Activated CD4-positive, alpha-beta memory T cell treated with anti-CD3 and anti-CD28 coated beads for 36 hours (primary cell): ENCODE measurements at regions of chr15 and their contacts with region 1.

Region 1: DNA sequence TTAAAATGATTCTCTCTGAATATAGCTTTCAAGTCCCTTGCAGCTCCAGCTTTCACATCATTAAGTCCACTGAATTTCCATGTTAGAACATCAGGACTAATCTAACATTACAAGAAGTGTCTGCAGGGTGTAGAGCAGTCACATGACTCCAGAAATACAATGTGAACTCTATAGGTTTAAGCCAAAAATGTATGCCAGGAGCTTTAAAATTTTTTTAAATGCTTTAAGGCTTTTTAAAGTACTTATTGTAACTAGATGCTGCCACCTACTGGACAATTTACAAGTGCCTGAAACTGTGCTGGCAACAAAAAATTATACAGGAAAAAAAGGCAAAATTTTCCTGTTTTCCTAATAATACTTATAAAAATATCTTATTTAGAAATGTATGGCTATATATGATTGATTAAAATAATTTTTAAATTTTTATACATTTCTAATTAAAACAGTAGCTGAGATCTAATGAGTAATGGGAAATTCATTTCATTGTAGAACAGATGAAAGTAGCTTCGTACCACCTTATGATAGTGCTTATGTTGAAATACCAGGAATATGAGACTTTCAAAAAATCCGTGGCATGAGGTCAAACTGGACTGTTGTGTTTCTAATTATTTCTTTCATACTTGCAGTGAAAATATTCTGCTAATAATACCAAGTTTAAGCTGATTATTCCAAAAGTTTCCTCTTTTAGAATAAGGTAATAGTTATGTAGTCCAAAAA is 25.7 kb downstream of the FSIP1 start:
- DNase-seq: no peak
- H3K4me3 Mint-ChIP-seq: no peak overlapping the region
- H3K27ac Mint-ChIP-seq: no peak overlapping the region
- H3K4me1 Mint-ChIP-seq: no peaks in the 10 kb centered on the region
- H3K27me3 Mint-ChIP-seq: no peaks in the 10 kb centered on the region

Region 2: DNA sequence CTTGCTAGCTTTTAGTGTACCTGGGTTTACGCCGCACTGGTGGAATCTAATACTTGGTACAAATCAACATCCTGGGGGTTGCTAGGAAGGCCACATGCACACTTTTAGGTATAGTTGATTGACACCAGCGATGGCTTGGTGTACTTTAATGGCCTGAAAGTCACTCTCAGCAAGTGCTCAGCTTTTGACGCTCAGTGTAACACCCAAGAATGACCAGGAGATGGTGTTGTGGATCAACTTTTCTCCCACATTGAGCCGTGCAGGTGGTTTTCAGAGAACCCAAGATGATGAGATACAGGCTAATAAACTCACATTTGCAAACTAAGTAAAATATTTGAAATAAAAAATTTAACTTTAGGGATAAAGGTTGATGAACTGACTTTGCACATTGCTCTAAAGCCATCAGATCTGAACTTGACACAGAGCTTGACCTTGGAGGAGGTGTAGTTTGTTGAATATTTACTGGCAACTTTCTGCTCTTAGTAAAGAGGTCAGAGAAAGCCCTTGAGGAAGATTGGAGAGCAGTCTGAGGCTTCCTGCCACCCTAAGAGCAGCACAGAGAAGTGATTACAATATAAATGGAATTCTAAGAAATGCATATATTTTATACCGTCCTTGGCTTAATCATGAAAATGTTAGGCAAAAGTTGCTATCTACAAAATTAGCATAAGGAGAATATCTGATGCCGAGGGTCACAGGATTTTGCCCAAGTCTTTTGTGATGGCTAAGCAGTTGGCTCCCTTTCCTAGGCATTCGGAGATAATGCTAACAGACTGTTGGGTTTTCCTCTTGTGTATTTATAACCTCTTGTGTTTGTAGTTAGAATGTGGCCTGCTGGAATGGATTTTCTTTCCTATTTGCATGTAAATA is 1048.9 kb before region 1 on chr15:
- CTCF ChIA-PET with region 1: interaction called, 27 read pairs
- POLR2A ChIA-PET with region 1: no interaction called
- intact Hi-C with region 1: loop called (anchors 5 kb)
- DNase-seq: peak; percentile 46
- H3K4me3 Mint-ChIP-seq: no peak overlapping the region
- H3K27ac Mint-ChIP-seq: no peak overlapping the region
- H3K4me1 Mint-ChIP-seq: peaks cover 7% of the 10 kb centered on the region
- H3K27me3 Mint-ChIP-seq: no peaks in the 10 kb centered on the region

Region 3: GRCh38 chr15:39171944-39172368 is 585.0 kb before region 1 on chr15:
- CTCF ChIA-PET with region 1: interaction called, 15 read pairs
- POLR2A ChIA-PET with region 1: no interaction called
- intact Hi-C with region 1: no loop called
- DNase-seq: peak; percentile 48
- H3K4me3 Mint-ChIP-seq: no peak overlapping the region
- H3K27ac Mint-ChIP-seq: no peak overlapping the region
- H3K4me1 Mint-ChIP-seq: no peaks in the 10 kb centered on the region
- H3K27me3 Mint-ChIP-seq: peaks cover 19% of the 10 kb centered on the region

Region 4: GRCh38 chr15:39594056-39594763 is 162.8 kb before region 1 on chr15:
- CTCF ChIA-PET with region 1: interaction called, 19 read pairs
- POLR2A ChIA-PET with region 1: no interaction called
- intact Hi-C with region 1: no loop called
- DNase-seq: peak; percentile 63
- H3K4me3 Mint-ChIP-seq: no peak overlapping the region
- H3K27ac Mint-ChIP-seq: no peak overlapping the region
- H3K4me1 Mint-ChIP-seq: peaks cover 8% of the 10 kb centered on the region
- H3K27me3 Mint-ChIP-seq: no peaks in the 10 kb centered on the region

Region 5: DNA sequence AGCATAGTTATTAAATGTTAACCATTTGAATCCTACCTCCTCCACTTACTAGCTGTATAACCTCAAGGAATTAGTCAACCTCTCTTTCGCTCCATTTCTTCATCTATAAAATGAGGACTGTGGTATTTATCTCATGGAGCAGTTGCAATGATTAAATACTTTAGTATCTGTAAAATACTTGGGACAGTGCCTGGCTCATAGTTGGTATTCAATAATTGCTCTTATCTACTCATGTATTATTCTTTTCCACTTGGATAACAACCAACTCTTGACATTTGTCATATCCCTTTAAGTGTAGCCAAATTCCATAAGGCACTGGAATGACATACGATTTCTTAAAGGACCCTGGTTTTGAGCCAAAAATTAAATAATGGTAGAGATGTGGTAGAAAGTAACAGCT is 46.3 kb before region 1 on chr15:
- CTCF ChIA-PET with region 1: interaction called, 19 read pairs
- POLR2A ChIA-PET with region 1: no interaction called
- intact Hi-C with region 1: no loop called
- DNase-seq: no peak
- H3K4me3 Mint-ChIP-seq: no peak overlapping the region
- H3K27ac Mint-ChIP-seq: no peak overlapping the region
- H3K4me1 Mint-ChIP-seq: no peaks in the 10 kb centered on the region
- H3K27me3 Mint-ChIP-seq: no peaks in the 10 kb centered on the region

Region 6: DNA sequence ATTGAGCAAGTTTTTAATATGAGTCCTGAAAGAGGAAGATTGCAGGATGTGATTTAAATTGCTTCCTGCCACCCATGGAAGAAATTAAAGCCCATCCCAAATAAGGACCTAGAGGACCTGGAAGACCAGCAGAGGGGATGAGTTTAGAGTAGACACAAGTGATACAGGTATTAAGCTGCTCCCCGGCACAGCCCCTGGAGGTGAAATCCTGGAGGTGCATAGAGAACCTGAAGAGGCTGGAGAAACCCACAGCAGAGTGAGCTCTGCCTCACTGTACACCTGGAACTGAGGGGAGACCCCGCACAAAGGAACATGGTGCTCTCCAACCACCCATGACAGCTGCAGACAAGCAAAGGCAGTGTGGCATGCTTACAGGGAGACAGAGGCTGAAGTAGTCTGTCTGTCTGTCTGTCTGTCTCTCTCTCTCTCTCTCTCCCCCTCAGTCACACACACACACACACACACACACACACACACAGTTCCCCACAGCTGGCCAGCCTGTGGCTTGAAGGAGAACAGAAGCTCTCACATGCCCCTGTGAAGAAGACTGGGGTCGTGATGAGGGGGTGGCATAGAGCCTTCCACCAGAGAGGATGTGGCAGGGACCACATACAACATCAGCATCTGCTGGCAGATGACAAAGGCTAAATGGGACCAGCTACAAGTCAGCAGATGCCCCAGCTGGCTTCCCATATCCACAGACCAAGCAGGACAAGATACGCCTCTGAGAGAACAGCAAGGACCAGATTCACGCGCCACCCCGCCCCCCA is 12.4 kb before region 1 on chr15:
- CTCF ChIA-PET with region 1: interaction called, 28 read pairs
- POLR2A ChIA-PET with region 1: no interaction called
- intact Hi-C with region 1: no loop called
- DNase-seq: no peak
- H3K4me3 Mint-ChIP-seq: no peak overlapping the region
- H3K27ac Mint-ChIP-seq: no peak overlapping the region
- H3K4me1 Mint-ChIP-seq: no peaks in the 10 kb centered on the region
- H3K27me3 Mint-ChIP-seq: peaks cover 9% of the 10 kb centered on the region

Region 7: DNA sequence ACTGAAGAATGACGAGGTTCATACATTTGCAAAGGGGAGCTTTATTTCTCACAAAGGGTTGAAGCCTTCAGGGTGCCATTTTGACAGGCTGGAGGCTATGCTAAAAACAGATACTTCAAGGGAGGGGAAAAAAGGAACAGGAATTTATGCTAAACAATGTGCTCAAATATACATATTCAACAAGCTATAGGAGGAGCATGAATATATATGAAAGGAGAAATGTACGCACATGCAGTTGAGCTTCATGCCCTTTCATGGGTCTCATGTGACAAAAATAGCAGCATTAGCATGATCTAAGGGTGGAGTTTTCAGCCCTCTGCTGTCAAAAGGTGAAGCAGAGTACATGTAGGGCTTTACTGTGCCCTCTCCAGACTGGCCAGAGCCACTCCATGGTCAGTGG is 70.0 kb after region 1 on chr15:
- CTCF ChIA-PET with region 1: no interaction called
- POLR2A ChIA-PET with region 1: no interaction called
- intact Hi-C with region 1: no loop called
- DNase-seq: no peak
- H3K4me3 Mint-ChIP-seq: no peak overlapping the region
- H3K27ac Mint-ChIP-seq: no peak overlapping the region
- H3K4me1 Mint-ChIP-seq: no peaks in the 10 kb centered on the region
- H3K27me3 Mint-ChIP-seq: peaks cover 18% of the 10 kb centered on the region